Calu3 (cell line): ENCODE measurements at regions of chr6 and their contacts with region 1.

Region 1: GRCh38 chr6:165850434-165851019 is 187.5 kb upstream of the PDE10A start:
- DNase-seq: peak; percentile 77
- H3K4me3 Mint-ChIP-seq: no peak overlapping the region
- H3K27ac Mint-ChIP-seq: no peak overlapping the region
- H3K4me1 Mint-ChIP-seq: peaks cover 18% of the 10 kb centered on the region
- H3K27me3 Mint-ChIP-seq: peaks cover 17% of the 10 kb centered on the region
- CTCF ChIP-seq: peak; percentile 91

Region 2: GRCh38 chr6:165245287-165245686 is 605.2 kb before region 1 on chr6:
- CTCF ChIA-PET with region 1: no interaction called
- intact Hi-C with region 1: loop called (anchors 10 kb)
- DNase-seq: peak; percentile 25
- H3K4me3 Mint-ChIP-seq: no peak overlapping the region
- H3K27ac Mint-ChIP-seq: peak overlapping the region; percentile 57
- H3K4me1 Mint-ChIP-seq: peaks cover 11% of the 10 kb centered on the region
- H3K27me3 Mint-ChIP-seq: peaks cover 9% of the 10 kb centered on the region
- CTCF ChIP-seq: peak; percentile 19

Region 3: DNA sequence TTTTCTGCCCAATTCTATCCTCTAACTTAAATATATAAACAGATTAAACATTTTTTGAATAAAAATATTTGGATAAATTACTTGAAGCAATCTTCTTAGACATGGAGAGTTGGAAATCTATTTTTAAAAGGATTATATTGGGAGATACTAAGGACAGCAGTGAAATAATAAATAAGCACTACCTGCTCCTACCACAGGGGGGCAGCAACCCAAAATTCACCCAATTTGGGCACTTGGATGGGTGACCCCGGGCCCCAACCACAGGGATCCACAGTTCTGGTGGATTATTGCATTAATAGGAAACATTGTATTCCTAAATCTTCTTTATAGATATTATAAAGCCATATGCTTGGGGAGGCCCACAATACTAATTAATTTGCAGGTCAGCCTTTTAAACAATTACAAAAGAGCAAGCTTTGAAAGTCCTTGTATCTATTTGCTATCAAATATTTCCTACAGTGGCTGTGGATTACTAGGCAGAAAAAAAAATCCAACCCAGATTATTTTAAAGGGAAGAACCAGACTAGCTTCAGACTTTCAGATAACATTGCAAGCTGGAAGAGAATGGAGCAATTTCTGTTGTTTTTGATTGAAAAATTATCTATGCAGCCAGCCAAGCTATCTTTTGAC is 121.1 kb before region 1 on chr6:
- CTCF ChIA-PET with region 1: interaction called, 8 read pairs
- intact Hi-C with region 1: loop called (anchors 1 kb)
- DNase-seq: peak; percentile 73
- H3K4me3 Mint-ChIP-seq: no peak overlapping the region
- H3K27ac Mint-ChIP-seq: no peak overlapping the region
- H3K4me1 Mint-ChIP-seq: no peaks in the 10 kb centered on the region
- H3K27me3 Mint-ChIP-seq: no peaks in the 10 kb centered on the region
- CTCF ChIP-seq: peak; percentile 83

Region 4: DNA sequence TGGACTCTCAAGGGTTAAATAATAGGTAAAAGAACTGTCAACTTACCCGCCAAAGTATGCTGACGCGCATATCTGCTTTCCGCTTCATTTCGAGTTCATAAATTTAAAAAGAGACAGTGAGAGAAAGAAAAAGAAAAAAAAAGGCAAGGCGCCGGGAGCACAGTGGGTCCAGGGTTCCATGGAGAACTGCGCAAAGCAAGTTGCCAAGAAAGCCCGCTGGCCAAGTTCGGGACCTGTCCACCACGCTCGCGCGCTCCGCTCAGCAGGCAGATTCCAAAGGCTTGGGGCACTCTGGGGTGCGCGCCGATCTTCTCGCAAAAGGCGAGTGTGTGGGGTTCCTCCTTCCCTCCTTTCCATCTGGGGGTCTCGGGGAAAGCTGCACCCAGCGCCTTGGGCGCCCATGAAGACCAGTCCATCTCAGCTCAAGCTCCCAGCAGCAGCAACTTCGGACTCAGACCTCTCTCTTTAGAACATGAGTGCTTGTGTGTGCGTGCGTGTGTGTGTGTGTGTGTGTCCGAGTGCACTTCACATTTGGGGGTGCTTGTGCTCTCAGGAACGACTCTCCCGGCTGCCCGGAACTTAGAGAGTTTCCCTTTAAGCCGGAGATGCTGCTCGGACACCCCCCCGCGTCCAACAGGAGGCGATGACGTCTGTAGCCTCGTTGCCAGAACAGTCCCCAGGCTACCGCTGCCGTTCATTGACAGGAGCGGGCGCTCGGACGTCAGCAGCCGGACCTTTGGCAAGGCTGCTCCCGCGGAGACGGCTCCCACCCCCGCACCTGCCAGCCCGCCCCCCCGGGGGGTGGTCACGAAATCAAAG is 137.2 kb after region 1 on chr6:
- CTCF ChIA-PET with region 1: no interaction called
- intact Hi-C with region 1: no loop called
- DNase-seq: peak; percentile 69
- H3K4me3 Mint-ChIP-seq: peak overlapping the region; percentile 67
- H3K27ac Mint-ChIP-seq: no peak overlapping the region
- H3K4me1 Mint-ChIP-seq: peaks cover 12% of the 10 kb centered on the region
- H3K27me3 Mint-ChIP-seq: peaks cover 70% of the 10 kb centered on the region
- CTCF ChIP-seq: no peak